ENCODE measurements at regions of chr2 and their contacts with region 1.

Region 1: DNA sequence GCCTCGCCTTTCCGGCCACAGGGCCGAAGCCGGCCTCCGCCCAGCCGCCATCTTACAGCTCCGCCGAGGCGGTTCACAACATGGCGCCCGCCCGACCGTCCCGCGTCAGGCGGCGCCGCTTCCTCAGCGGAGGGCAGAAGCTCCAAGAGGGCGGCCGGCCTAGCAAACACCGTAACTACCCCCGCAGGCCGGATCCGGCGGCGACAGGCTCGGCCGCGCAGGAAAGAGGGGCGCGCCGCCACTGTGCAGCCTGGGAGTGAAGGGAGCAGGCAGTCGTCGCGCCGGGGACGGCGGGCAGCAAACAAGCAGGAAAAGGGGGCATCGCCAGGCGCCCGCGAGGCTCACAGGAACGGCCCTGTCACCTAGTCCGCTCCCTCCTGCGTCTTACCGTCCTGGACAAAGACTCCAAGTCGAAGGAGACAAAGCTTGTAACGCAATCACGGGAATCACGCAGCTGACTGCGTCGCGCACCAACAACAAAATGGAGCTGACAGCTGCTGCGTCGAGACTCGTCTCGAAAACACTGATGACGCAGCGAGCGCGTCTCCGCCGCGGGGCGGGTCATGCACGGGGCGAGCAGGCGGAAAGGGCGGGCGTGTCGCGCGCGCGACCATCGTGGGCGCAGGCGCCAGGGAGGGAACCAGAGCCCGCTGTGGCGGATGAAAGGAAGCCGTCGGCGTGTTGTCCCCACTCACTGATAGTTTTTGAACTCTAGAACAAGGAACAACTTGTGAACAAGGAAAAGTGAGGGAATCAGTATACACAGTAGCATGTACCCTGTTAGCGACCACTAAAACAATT is at the start of gene CLK1:
- DNase-seq: peak; percentile 98
- ATAC-seq: peak; percentile 77
- H3K4me3 Mint-ChIP-seq: peak within 1 kb of the TSS; percentile 87
- H3K27ac Mint-ChIP-seq: peak within 1 kb of the TSS; percentile 99
- H3K4me1 Mint-ChIP-seq: peaks cover 26% of the 10 kb centered on the region
- H3K27me3 Mint-ChIP-seq: no peaks in the 10 kb centered on the region
- total RNA-seq, gene CLK1: 86.4 to 99.3 TPM

Region 2: DNA sequence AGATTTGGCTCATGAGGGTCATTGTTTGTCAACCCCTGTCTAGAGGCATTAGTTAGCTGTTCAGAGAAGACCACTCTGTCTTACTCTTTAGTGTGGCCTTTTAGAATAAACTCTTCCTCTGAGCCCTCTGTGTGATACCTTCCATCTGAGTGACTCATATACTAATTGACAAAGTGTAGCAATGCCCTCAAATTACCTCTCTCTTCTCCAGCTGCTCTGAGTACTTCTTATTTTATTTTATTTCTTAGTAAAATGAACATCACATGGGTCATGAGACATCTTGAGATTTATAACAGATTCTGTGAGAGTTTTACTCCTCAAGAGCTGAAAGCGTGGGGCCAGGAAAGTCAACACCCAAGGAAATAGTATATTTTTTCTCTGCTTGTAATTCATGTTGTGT is 421.9 kb before region 1 on chr2:
- CTCF ChIA-PET with region 1: no interaction called
- POLR2A ChIA-PET with region 1: no interaction called
- intact Hi-C with region 1: no loop called
- DNase-seq: no peak
- ATAC-seq: peak; percentile 66
- H3K4me3 Mint-ChIP-seq: no peak overlapping the region
- H3K27ac Mint-ChIP-seq: no peak overlapping the region
- H3K4me1 Mint-ChIP-seq: peaks cover 13% of the 10 kb centered on the region
- H3K27me3 Mint-ChIP-seq: no peaks in the 10 kb centered on the region

Region 3: DNA sequence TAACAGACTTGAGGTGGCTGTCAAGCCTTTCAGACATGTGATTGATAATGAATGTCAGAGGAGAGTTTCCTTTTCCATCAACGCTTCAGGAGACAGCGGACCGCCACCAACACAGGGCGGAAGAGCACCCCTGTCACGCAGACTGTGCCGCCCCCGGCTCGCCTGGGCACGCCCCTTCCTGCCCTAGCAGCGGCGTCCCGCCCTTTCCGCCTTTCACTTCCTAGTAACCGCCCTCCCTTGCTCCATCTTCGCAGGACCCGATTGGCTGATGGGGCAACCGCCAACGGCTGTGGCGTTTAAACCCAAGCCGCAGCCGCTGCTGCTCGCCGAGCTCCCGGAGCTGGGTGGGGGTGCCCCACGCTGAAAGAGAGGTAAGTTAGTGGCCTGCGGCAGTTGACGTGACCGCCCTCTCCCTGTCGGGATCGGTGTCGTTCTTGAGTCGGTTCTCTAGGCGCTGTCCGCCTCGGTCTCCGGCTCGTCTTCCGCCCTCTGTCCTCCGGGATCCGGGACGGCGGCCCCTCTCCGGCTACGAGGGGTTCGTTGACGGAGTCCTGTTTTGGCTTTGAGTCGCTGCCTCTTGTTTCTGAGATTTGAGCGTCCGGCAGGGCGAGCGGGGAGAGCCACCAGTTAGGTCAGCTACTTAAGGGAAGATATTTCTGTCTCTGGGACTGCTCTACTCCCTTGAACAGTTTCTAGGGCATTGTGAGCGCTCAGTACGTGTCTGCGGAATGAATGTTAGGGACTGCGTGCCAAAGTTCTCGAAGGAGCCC is 338.3 kb before region 1 on chr2 and contains the start of gene SGO2:
- CTCF ChIA-PET with region 1: interaction called, 5 read pairs
- POLR2A ChIA-PET with region 1: interaction called, 4 read pairs
- intact Hi-C with region 1: loop called in 1 of 2 experiments (anchors 2 kb)
- DNase-seq: peak; percentile 98
- ATAC-seq: peak; percentile 99
- H3K4me3 Mint-ChIP-seq: peak within 1 kb of the TSS; percentile 97
- H3K27ac Mint-ChIP-seq: peak within 1 kb of the TSS; percentile 90
- H3K4me1 Mint-ChIP-seq: peaks cover 23% of the 10 kb centered on the region
- H3K27me3 Mint-ChIP-seq: no peaks in the 10 kb centered on the region
- total RNA-seq, gene SGO2: 49.9 to 56.7 TPM

Region 4: DNA sequence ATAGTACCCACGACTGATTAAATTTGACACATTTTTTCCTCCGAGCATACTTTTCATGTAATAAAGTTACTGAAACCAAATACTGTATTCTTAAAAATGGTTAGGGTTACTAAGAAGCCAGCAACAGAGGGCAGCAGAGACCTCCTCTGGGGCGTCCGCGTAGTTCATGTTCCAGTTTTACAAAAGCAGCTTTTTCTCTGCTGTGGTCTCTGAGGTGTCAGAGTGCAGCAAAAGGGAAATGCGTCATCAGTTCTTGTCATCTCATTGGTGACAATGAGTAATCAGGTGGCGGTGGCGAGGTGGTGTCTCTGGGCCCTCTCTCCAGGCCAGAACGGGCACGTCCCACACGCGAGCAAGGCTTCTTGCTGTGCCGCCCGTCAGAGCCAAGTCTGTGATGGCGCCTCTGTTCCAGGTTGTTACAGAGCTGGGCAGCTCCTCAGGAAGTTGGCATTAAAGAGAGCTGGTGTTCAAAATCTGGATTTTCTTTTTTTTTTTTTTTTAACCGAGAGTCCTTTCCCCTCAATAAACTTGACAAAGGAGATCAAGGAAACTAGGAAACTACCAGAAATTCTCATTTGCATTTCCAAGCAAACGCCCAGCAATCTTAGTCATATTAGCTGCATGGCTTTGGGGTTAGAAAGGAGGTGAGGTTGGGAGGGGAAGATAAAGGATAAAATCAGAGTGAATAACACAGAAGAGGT is 151.2 kb before region 1 on chr2:
- CTCF ChIA-PET with region 1: interaction called, 11 read pairs
- POLR2A ChIA-PET with region 1: interaction called, 15 read pairs
- intact Hi-C with region 1: loop called (anchors 1 kb)
- DNase-seq: peak; percentile 98
- ATAC-seq: peak; percentile 93
- H3K4me3 Mint-ChIP-seq: peak overlapping the region; percentile 70
- H3K27ac Mint-ChIP-seq: peak overlapping the region; percentile 100
- H3K4me1 Mint-ChIP-seq: peaks cover 47% of the 10 kb centered on the region
- H3K27me3 Mint-ChIP-seq: no peaks in the 10 kb centered on the region

Region 5: DNA sequence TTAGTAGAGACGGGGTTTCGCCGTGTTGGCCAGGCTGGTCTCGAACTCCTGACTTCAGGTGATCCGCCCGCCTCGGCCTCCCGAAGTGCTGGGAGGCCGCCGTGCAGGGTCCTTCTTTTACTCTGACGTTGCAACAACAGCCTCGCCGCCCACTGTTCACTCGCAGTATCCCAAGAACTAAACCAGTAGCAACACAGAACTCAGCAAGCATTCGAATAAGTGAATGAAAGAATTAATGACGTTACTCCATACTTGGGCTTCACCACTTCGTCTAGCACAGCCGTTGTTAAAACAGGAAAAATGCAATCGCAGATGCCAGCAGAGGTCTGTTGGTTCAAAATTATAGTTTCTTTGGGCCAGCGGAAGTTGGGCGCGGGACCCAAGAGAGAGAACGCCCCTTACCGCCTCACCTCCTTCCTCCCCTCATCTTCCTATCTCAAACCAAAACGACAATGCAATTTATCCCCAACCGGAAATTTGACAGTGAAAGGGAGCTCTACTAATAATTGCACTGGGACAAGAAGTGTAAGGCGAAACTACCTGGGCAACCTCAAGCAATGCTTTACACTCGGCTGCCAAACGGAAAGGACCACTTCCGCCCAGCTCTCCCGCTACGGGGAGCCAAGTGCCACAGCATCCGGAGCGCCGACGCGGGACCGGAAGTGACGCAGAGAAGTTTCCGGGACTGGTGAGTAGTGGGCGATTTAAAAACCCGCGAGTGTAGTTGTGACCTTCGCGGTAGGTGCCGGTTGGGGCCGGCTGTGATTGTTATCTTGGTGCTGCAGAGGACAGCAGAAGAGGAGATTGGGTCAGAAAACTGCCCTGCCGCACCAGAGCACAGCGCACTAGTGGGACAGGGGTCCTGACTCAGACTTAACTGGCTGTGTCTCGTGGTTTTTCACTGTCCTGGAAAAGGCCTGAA is 24.6 kb after region 1 on chr2 and contains the starts of genes NIF3L1 and PPIL3:
- CTCF ChIA-PET with region 1: interaction called, 9 read pairs
- POLR2A ChIA-PET with region 1: interaction called, 49 read pairs
- intact Hi-C with region 1: loop called (anchors 1 kb)
- DNase-seq: peak; percentile 99
- ATAC-seq: peak; percentile 83
- H3K4me3 Mint-ChIP-seq: peak within 1 kb of the TSS; percentile 98
- H3K27ac Mint-ChIP-seq: peak within 1 kb of the TSS; percentile 100
- H3K4me1 Mint-ChIP-seq: peaks cover 46% of the 10 kb centered on the region
- H3K27me3 Mint-ChIP-seq: no peaks in the 10 kb centered on the region
- total RNA-seq, gene NIF3L1: 37.0 to 47.7 TPM
- total RNA-seq, gene PPIL3: 52.6 to 53.0 TPM

Region 6: DNA sequence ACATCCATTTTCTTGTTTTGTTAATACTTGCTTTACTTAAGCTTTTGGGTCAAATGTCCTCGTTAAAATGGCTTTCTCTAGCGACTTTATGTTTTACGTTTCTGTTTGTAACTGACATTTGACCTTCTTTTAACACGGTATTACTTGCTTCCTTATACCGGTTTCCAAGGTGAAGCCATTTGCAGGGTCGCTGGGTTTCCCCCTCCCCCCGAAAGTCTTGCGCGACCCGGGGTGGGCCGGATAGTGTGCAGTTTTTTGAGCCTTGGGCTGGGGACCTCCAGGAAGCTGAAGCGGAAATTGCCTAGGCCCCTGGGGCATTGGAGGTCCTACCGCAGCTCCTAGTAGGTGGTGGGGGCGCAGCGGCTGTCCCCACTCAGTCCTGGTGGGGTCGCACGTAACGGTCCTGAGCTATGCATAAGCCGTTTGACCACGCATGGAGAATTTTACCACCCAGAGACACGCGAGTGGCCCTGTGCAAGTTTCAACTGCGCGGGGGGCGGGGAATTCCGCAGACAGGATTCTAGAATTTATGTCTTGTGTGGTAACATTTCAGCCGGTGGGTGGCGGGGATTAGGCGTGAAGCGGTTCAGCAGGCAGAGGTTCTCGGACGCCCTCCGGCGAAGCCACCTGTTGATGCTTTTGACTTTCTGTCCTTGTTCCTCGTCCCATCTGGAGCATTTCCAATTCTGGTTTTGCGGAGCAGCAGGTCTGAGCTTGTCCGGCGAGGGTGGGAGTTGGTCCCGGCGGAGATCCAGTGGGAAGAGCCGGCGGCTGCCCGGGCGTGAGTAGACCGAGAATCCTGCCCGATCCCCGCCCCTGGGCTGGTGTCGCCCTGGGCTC is 254.0 kb after region 1 on chr2:
- CTCF ChIA-PET with region 1: interaction called, 3 read pairs
- POLR2A ChIA-PET with region 1: interaction called, 4 read pairs
- intact Hi-C with region 1: loop called (anchors 1 to 2 kb)
- DNase-seq: peak; percentile 94
- ATAC-seq: peak; percentile 37
- H3K4me3 Mint-ChIP-seq: peak overlapping the region; percentile 98
- H3K27ac Mint-ChIP-seq: peak overlapping the region; percentile 100
- H3K4me1 Mint-ChIP-seq: peaks cover 42% of the 10 kb centered on the region
- H3K27me3 Mint-ChIP-seq: no peaks in the 10 kb centered on the region